ENCODE measurements at regions of chr5 and their contacts with region 1.

Region 1: DNA sequence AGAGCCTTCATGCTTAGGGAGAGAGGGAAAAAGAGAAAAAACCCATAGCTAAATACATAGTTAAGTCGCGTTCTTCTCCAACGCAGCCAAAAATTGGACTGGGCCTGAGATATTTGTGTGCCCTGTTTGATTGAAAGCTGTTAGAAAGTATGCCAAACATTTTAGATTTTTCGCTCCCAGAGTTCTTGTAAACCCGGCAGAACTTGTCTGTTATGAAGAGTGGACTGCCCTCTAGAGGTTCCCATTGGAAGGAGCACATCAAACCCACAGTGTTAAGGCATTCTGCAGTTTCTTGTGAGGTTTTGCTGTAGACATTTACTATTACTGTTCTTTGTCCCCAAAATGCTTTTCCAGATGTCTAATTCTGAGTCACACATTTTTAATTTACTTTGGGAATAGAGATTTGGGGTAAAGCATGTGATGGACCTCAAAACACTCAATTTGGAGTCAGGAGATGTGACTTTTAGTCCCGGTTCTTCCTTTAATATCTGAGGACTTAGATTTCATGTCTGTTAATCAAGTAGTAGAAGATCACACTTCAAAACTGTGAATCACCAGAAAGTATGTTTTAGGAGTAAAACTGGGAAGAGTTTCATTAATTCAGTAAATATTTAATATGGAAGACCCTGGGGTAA is 96.6 kb downstream of the PCSK1 start:
- DNase-seq: peak; percentile 79
- ATAC-seq: peak; percentile 93
- H3K4me3 Mint-ChIP-seq: no peak overlapping the region
- H3K27ac Mint-ChIP-seq: no peak overlapping the region
- H3K4me1 Mint-ChIP-seq: no peaks in the 10 kb centered on the region
- H3K27me3 Mint-ChIP-seq: peaks cover 25% of the 10 kb centered on the region
- CTCF ChIP-seq: peak; percentile 80

Region 2: GRCh38 chr5:95853490-95853889 is 483.0 kb before region 1 on chr5:
- CTCF ChIA-PET with region 1: interaction called, 53 read pairs
- POLR2A ChIA-PET with region 1: no interaction called
- intact Hi-C with region 1: loop called (anchors 1 kb)
- DNase-seq: no peak
- ATAC-seq: no peak
- H3K4me3 Mint-ChIP-seq: no peak overlapping the region
- H3K27ac Mint-ChIP-seq: no peak overlapping the region
- H3K4me1 Mint-ChIP-seq: peaks cover 5% of the 10 kb centered on the region
- H3K27me3 Mint-ChIP-seq: no peaks in the 10 kb centered on the region
- CTCF ChIP-seq: no peak

Region 3: DNA sequence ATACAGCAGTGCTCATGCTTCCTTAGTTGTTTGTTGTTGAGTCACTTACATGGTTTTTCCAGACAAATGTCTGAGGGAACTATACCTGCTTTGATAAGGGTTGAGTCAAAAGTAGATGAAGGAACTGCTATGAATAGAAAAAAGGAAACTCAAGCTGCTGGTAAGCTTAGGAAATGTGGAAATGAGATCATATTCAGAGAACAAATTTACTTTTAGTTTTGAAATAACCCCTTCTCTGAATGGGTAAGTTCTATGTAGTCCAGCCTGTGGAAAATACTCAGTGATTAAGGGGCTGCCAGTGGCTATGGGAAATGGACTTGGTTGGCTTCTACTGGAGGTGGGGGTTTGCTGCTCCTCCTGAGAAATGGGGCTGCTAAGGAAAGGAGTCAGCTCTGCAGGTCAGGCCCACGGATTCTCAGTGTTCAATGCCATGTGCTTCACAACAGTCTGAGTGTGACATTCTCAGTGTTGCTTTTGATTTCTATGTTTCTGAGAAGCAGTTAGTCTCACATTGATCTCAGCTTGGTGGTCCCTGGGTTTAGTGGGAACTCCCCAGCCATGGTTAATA is 466.3 kb before region 1 on chr5:
- CTCF ChIA-PET with region 1: interaction called, 19 read pairs
- POLR2A ChIA-PET with region 1: no interaction called
- intact Hi-C with region 1: no loop called
- DNase-seq: peak; percentile 82
- ATAC-seq: peak; percentile 82
- H3K4me3 Mint-ChIP-seq: peak overlapping the region; percentile 65
- H3K27ac Mint-ChIP-seq: peak overlapping the region; percentile 100
- H3K4me1 Mint-ChIP-seq: peaks cover 52% of the 10 kb centered on the region
- H3K27me3 Mint-ChIP-seq: no peaks in the 10 kb centered on the region
- CTCF ChIP-seq: no peak

Region 4: DNA sequence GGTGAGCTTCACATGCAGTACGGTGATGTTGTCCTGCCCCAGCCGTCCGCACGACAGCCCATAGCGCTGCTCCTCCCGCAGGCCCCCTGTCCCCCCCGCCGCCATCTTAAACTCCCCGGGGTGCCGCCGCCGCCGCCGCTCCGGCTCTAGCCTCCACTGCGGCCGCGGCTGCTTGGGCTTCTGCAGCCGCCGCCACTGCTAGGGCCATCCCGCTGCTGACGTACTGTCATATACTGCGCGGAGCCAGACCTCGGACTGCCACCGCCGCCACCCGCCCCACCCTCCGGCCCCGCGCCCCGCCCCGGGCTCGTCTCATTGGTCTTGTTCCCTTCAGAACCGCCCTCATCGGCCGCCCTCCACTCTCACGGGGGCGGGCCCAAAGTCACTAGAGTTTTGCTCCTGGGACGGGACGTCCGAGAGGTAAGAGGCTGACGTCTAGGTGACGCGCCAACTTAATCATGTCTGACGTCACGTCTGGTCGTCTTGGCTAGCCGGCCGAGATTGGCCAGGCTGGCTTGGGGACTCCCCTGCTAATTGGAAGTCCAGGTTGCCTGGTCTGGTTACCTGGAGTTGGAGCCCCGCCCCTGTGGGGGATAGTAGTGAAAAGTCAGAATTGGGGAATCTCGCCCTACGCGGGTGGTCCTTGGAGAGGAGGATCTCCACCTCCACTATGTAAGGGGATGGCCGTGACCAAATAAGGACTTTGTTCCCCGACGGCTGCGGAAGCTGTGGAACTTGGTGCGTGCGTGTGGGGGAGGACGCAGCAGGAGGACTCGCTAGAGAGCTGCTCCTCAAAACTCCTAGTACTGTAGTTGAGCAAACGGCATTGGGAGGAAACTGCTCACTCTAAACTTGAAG is 374.6 kb before region 1 on chr5 and contains the start of gene ELL2:
- CTCF ChIA-PET with region 1: interaction called, 16 read pairs
- POLR2A ChIA-PET with region 1: no interaction called
- intact Hi-C with region 1: loop called (anchors 2 kb)
- DNase-seq: peak; percentile 99
- ATAC-seq: peak; percentile 91
- H3K4me3 Mint-ChIP-seq: peak within 1 kb of the TSS; percentile 95
- H3K27ac Mint-ChIP-seq: peak within 1 kb of the TSS; percentile 98
- H3K4me1 Mint-ChIP-seq: peaks cover 47% of the 10 kb centered on the region
- H3K27me3 Mint-ChIP-seq: no peaks in the 10 kb centered on the region
- CTCF ChIP-seq: no peak
- total RNA-seq, gene ELL2: 39.7 to 46.3 TPM

Region 5: DNA sequence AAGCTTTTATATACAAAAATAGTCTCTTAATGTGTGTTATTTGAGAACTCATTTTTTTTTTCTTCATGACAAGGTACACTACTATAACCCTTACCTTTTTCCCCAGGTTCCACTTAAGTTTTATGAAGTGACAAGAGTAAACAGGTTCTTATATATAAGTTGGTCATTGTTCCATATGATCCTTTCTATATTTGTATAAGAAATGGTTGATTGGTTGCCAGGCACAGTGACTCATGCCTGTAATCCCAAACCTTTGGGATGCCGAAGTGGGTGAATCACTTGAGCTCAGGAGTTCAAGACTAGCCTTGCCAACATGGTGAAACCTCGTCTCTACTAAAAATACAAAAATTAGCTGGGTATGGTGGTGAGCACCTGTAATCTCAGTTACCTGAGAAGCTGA is 11.8 kb before region 1 on chr5:
- CTCF ChIA-PET with region 1: interaction called, 43 read pairs
- POLR2A ChIA-PET with region 1: no interaction called
- intact Hi-C with region 1: no loop called
- DNase-seq: no peak
- ATAC-seq: no peak
- H3K4me3 Mint-ChIP-seq: no peak overlapping the region
- H3K27ac Mint-ChIP-seq: no peak overlapping the region
- H3K4me1 Mint-ChIP-seq: no peaks in the 10 kb centered on the region
- H3K27me3 Mint-ChIP-seq: peaks cover 20% of the 10 kb centered on the region
- CTCF ChIP-seq: no peak

Region 6: DNA sequence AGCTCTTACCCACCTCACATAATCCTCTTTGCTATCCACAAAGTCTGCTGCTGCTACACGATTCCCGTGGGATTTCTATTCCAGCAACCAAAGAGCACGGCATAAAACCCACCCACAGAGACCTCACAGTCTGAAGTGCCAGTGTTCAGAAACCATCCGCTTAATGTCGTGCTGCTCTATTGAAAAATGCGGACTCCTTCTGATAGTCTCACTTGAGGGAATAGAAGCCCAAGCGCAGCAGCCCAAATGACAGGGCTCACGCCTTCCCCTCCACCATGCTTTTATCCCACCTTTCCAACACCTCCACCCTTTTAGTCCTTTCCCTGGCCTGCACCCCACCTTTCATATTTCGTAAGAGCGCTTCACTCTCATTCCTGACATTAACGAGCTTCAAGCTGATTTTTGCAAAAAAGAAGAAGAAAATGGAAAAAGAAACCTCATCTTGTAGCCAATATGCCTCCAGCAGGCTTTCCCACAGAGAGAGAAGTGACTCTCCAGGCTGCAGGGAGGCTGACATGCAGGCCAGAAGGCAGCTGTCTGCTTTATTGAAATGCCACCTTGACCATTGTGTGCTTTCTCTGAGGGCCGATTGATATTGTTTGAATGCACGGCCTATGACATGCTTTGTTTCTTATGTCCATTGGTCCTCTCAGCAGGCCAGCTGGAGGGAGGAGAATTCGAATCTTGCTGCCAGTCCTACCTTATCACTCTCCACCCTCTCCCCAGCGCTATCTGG is 167.2 kb after region 1 on chr5:
- CTCF ChIA-PET with region 1: no interaction called
- POLR2A ChIA-PET with region 1: no interaction called
- intact Hi-C with region 1: no loop called
- DNase-seq: no peak
- ATAC-seq: no peak
- H3K4me3 Mint-ChIP-seq: no peak overlapping the region
- H3K27ac Mint-ChIP-seq: no peak overlapping the region
- H3K4me1 Mint-ChIP-seq: peaks cover 2% of the 10 kb centered on the region
- H3K27me3 Mint-ChIP-seq: peaks cover 1% of the 10 kb centered on the region
- CTCF ChIP-seq: no peak

Region 7: DNA sequence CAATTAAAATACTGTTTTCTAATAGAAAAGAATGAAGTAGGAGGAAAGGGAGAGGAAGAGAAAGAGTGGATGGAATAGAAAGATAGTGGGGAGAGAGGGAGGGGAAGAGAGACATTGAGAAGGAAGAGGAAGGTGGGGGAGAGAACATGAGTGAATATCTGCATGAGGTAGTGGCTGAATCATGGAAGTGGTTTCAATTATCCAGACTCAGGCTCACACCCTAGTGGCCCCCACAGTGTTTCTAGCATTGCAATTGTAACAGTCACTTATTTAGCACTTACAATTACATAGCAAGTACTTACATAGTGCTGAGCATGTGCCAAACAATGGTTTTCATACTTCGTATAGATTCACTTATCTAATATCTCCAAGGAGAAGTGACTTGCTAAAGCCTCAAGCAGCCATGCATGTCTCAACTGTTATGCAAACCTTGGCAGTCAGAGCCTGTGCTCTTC is 398.4 kb after region 1 on chr5:
- CTCF ChIA-PET with region 1: no interaction called
- POLR2A ChIA-PET with region 1: no interaction called
- intact Hi-C with region 1: no loop called
- DNase-seq: no peak
- ATAC-seq: no peak
- H3K4me3 Mint-ChIP-seq: no peak overlapping the region
- H3K27ac Mint-ChIP-seq: no peak overlapping the region
- H3K4me1 Mint-ChIP-seq: peaks cover 5% of the 10 kb centered on the region
- H3K27me3 Mint-ChIP-seq: no peaks in the 10 kb centered on the region
- CTCF ChIP-seq: no peak

Measured in activated CD8-positive, alpha-beta T cell treated with anti-CD3 and anti-CD28 coated beads for 36 hours (primary cell).